H1 (cell line): ENCODE measurements at regions of chr1 and their contacts with region 1.

Region 1: DNA sequence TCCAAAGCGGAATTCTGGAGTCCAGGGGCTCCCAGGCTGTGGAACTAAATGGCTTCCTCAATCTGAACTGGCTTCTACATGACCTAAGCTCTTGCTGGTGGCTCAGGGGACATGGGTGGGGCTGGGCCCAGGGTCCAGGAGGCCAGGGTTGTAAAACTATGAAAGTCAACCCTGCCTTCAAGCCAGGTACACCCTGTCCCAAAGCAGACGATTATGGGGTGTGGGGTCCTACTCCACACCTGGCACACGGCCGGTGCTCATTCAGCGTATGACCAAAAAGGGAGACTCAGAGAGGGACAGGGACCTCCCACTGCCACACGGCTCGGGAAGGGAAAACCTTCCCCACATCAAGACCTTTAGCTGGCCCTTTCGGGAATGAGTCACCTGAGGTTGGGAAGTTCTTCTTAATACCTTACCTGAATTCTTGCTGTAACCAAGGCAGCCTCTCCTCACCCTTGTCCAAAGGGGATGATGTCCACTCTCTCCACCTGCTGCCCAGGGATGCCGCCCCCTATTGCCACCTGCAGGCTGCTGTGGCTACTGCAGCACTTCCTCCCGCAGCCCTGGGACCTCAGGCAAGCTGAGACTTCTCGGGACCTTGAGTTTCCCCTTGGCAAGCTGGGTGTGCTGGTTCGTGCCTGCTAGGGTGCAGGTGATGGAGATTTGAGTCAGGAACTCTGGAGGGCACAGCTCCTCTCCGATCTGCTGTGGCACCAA is 32.2 kb downstream of the RUNX3 start:
- DNase-seq: peak; percentile 10 to 89
- H3K4me3 ChIP-seq: no peak overlapping the region
- H3K27ac ChIP-seq: no peak overlapping the region
- H3K4me1 ChIP-seq: no peaks in the 10 kb centered on the region; a peak in 1 of 7 replicates
- H3K27me3 ChIP-seq: no peaks in the 10 kb centered on the region
- CTCF ChIP-seq: peak; percentile 87 to 98 (median 98)
- EP300 ChIP-seq: no peak
- POLR2A ChIP-seq: no peak
- RAD21 ChIP-seq: peak; percentile 65 to 78

Region 2: DNA sequence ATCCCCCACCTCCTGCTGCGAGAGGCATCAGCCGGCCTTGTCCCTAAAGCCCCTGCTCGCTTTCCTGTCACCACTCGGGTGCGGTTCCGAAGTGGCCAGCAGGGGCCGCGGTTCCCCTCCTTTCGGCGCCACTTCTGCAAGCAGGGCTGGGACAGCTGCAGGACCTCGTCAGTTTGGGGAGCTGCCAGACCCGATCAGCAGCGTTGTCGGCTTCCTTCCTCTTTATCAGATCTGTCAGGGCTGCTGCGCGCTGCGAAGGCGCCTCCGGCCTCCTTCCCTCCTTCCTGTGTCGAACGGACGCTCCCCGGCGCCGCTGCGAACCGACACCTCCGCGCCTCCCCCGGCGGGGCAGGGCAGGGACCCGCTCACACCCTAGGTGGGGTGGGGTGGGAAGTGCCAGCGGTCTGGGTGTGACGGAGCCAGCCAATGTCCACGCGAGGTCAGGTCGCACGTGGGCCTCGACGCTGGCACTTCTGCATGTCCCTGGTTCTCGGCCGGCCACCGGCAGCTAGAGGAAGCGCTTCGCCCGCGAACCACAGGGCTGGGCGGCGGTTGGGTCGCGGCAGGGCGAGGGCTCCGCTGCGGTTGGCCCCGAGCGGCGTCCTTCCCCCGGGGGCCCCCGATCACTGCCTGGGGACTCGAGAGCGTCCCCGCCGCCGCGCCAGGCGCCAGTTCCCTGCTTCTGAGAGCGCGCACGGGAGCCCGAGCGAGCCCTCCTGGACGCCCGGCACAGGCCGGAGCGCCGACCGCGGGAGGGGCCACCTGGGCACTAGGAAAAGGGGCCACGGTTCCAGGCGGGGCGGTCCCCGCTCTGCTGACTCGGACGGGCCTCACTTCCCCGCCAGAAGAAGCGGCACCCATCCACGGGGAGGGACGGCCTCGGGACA is 49.7 kb before region 1 on chr1:
- CTCF ChIA-PET with region 1: interaction called, 69 read pairs
- POLR2A ChIA-PET with region 1: no interaction called
- DNase-seq: peak; percentile 90 to 99
- H3K4me3 ChIP-seq: peak overlapping the region; percentile 26 to 65 (median 48)
- H3K27ac ChIP-seq: no peak overlapping the region
- H3K4me1 ChIP-seq: peaks cover 0 to 2% (median 0%) of the 10 kb centered on the region in 4 experiments; a peak in 2 of 7 replicates
- H3K27me3 ChIP-seq: peaks cover 0 to 13% (median 6%) of the 10 kb centered on the region in 4 experiments; a peak in 4 of 7 replicates
- CTCF ChIP-seq: peak; percentile 90 to 96 (median 93)
- EP300 ChIP-seq: no peak
- POLR2A ChIP-seq: peak; percentile 36 to 64; a peak in 2 of 3 replicates
- RAD21 ChIP-seq: peak; percentile 87 to 90

Region 3: GRCh38 chr1:24861821-24862727 is 35.9 kb before region 1 on chr1:
- CTCF ChIA-PET with region 1: interaction called, 69 read pairs
- POLR2A ChIA-PET with region 1: no interaction called
- DNase-seq: peak in 1 of 2 experiments; percentile 50
- H3K4me3 ChIP-seq: no peak overlapping the region
- H3K27ac ChIP-seq: no peak overlapping the region
- H3K4me1 ChIP-seq: peaks cover 0 to 4% (median 4%) of the 10 kb centered on the region in 4 experiments; a peak in 3 of 7 replicates
- H3K27me3 ChIP-seq: peaks cover 0 to 4% (median 0%) of the 10 kb centered on the region in 4 experiments; a peak in 2 of 7 replicates
- CTCF ChIP-seq: no peak
- EP300 ChIP-seq: no peak
- POLR2A ChIP-seq: no peak
- RAD21 ChIP-seq: no peak

Region 4: GRCh38 chr1:24872061-24872850 is 25.7 kb before region 1 on chr1:
- CTCF ChIA-PET with region 1: interaction called, 26 read pairs
- POLR2A ChIA-PET with region 1: no interaction called
- DNase-seq: no peak
- H3K4me3 ChIP-seq: no peak overlapping the region
- H3K27ac ChIP-seq: no peak overlapping the region
- H3K4me1 ChIP-seq: peaks cover 0 to 2% (median 0%) of the 10 kb centered on the region in 4 experiments; a peak in 2 of 7 replicates
- H3K27me3 ChIP-seq: peaks cover 0 to 3% (median 0%) of the 10 kb centered on the region in 4 experiments; a peak in 1 of 7 replicates
- CTCF ChIP-seq: no peak
- EP300 ChIP-seq: no peak
- POLR2A ChIP-seq: no peak
- RAD21 ChIP-seq: no peak

Region 5: GRCh38 chr1:24878775-24879742 is 18.9 kb before region 1 on chr1:
- CTCF ChIA-PET with region 1: interaction called, 22 read pairs
- POLR2A ChIA-PET with region 1: no interaction called
- DNase-seq: peak in 1 of 2 experiments; percentile 23
- H3K4me3 ChIP-seq: no peak overlapping the region
- H3K27ac ChIP-seq: no peak overlapping the region
- H3K4me1 ChIP-seq: peaks cover 0 to 2% (median 0%) of the 10 kb centered on the region in 4 experiments; a peak in 2 of 7 replicates
- H3K27me3 ChIP-seq: peaks cover 0 to 2% (median under 1%) of the 10 kb centered on the region in 4 experiments; a peak in 2 of 7 replicates
- CTCF ChIP-seq: no peak
- EP300 ChIP-seq: no peak
- POLR2A ChIP-seq: no peak
- RAD21 ChIP-seq: no peak

Region 6: GRCh38 chr1:24909388-24909898 is 11.5 kb after region 1 on chr1:
- CTCF ChIA-PET with region 1: interaction called, 14 read pairs
- POLR2A ChIA-PET with region 1: no interaction called
- DNase-seq: peak; percentile 79 to 89
- H3K4me3 ChIP-seq: no peak overlapping the region; a peak in 1 of 8 replicates
- H3K27ac ChIP-seq: no peak overlapping the region
- H3K4me1 ChIP-seq: peaks cover 0 to 2% (median 0%) of the 10 kb centered on the region in 4 experiments; a peak in 3 of 7 replicates
- H3K27me3 ChIP-seq: no peaks in the 10 kb centered on the region
- CTCF ChIP-seq: peak; percentile 72 to 95 (median 82)
- EP300 ChIP-seq: no peak
- POLR2A ChIP-seq: no peak
- RAD21 ChIP-seq: peak; percentile 56 to 67

Region 7: DNA sequence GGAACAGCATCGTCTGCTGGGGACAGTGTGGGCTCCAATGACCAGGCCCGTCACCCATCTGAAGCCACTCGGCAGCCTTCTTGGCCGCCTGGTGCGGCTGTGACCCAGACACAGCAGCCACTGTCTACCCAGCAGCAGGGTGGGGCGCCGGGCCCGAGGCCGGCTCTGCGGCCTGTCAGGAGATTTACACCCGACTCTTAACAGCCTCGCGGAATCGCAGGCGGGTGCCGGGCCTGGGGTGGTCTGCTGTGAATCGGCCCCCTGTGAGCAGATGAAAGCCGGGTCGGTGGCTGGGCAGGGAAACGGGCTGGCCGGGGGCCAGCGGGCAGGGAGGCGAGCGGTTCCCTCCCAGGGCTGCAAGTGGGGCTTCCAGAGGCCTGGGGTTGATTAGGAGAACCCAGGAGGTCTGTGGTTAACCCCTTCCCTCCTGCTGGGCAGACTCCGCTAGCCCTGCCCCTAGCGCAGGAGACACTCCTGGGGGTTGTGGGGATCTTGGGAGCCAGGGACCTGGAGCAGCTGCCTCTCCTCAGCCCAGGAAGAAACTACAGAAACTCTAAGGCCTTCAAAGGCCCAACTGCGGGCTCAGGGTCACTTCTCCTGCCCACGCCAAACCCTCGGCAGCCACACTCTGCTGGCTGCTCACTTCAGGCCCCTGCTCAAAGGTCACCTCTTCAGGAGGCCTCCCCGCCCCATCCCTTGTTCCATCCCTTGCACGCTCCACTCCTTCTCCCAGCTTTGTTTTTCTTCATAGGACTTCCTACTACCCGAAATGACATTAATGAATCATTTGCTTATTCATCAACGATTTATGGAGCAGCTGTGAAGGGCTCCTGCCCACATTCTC is 16.5 kb after region 1 on chr1:
- CTCF ChIA-PET with region 1: interaction called, 14 read pairs
- POLR2A ChIA-PET with region 1: no interaction called
- DNase-seq: no peak
- H3K4me3 ChIP-seq: no peak overlapping the region
- H3K27ac ChIP-seq: no peak overlapping the region
- H3K4me1 ChIP-seq: peaks cover 0 to 8% (median 4%) of the 10 kb centered on the region in 4 experiments; a peak in 4 of 7 replicates
- H3K27me3 ChIP-seq: no peaks in the 10 kb centered on the region
- CTCF ChIP-seq: no peak
- EP300 ChIP-seq: no peak
- POLR2A ChIP-seq: no peak
- RAD21 ChIP-seq: no peak

Region 8: GRCh38 chr1:24955161-24955560 is 57.2 kb after region 1 on chr1:
- CTCF ChIA-PET with region 1: no interaction called
- POLR2A ChIA-PET with region 1: no interaction called
- DNase-seq: no peak
- H3K4me3 ChIP-seq: no peak overlapping the region
- H3K27ac ChIP-seq: no peak overlapping the region
- H3K4me1 ChIP-seq: peaks cover 3 to 12% (median 7%) of the 10 kb centered on the region in 4 experiments; a peak in 6 of 7 replicates
- H3K27me3 ChIP-seq: no peaks in the 10 kb centered on the region
- CTCF ChIP-seq: no peak
- EP300 ChIP-seq: no peak
- POLR2A ChIP-seq: no peak
- RAD21 ChIP-seq: no peak